ENCODE measurements at regions of chr6 and their contacts with region 1.

Region 1: GRCh38 chr6:112037783-112038216 is 16.1 kb upstream of the CCN6 start:
- DNase-seq: peak; percentile 90

Region 2: DNA sequence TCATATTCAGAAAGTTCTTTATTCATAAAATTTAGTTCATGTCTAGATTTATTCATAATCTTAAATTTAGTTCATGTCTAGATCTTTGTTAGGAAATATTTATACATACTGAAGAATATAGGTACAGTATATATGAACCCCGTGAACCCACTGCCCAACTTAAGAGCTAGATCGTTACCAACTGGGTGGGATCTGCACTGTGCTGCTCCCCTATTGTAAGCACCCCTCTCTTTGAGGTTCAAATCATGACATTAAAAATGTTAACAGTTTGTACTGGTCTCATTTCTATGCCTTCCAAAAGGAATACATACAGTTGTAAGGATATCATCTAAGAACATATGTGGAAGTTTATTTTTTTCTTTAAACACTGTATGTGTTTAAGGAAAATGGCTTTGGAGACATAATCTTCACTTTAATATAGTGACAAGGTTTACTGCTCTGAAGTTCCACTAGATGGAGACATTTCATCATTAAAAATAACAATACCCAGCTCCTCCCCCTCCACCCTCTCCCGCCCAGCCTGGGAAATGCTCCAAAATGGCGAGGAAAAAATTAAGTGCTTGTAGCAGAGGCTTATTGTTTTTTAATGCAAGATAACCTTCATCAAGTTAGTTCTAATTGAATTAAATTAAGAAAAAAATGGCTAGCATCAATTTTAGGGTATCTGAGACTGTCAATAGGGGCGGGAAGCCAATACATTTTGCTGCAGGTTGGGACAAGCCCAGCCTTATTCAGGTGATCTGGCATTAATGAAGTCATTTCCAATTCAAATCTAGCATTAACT is 328.0 kb before region 1 on chr6:
- in situ Hi-C with region 1: loop called (anchors 10 kb)
- DNase-seq: peak; percentile 69

Region 3: GRCh38 chr6:111721753-111722154 is 316.0 kb before region 1 on chr6:
- in situ Hi-C with region 1: no loop called
- DNase-seq: peak; percentile 19

Region 4: DNA sequence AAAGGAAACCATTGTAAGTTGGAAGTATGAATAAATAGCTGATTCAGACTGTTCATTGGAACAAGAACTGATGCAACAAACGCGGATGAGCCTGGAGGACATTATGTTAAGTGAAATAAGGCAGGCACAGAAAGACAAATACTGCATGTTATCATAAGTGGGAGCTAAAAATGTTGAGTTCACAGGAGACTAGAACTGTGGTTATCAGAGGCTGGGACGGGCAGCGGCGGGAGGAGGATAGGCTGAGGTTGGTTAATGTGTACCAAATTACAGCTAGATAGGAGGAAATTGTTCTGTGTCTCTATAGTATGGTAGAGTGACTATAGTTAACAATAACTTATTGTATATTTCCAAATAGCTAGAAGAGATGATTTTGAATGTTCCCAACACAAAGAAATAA is 90.4 kb after region 1 on chr6:
- in situ Hi-C with region 1: no loop called
- DNase-seq: no peak

Region 5: GRCh38 chr6:112144145-112144926 is 106.5 kb after region 1 on chr6:
- in situ Hi-C with region 1: no loop called
- DNase-seq: no peak

Region 6: GRCh38 chr6:112223070-112223861 is 185.5 kb after region 1 on chr6:
- in situ Hi-C with region 1: no loop called
- DNase-seq: no peak

Measured in ACHN (cell line).